ENCODE measurements at regions of chr19 and their contacts with region 1.

Region 1: GRCh38 chr19:19145684-19146608 is 7.7 kb upstream of the TMEM161A start:
- DNase-seq: peak; percentile 76 to 83
- ATAC-seq: peak; percentile 65 to 84 (median 76)
- H3K4me3 ChIP-seq: peak overlapping the region in 6 of 10 donors; percentile 10 to 37 (median 27)
- H3K27ac ChIP-seq: peak overlapping the region in 5 of 10 donors; percentile 12 to 65 (median 31)
- H3K4me1 ChIP-seq: peaks cover 0 to 9% (median 4%) of the 10 kb centered on the region in 9 donors
- H3K27me3 ChIP-seq: no peaks in the 10 kb centered on the region
- CTCF ChIP-seq: peak; percentile 88 to 93 (median 91)

Region 2: GRCh38 chr19:19157808-19158207 is 11.9 kb after region 1 on chr19:
- intact Hi-C with region 1: no loop called
- DNase-seq: no peak
- ATAC-seq: no peak
- H3K4me3 ChIP-seq: no peak overlapping the region
- H3K27ac ChIP-seq: no peak overlapping the region
- H3K4me1 ChIP-seq: no peaks in the 10 kb centered on the region
- H3K27me3 ChIP-seq: peaks cover 0 to 4% (median 0%) of the 10 kb centered on the region in 7 donors
- CTCF ChIP-seq: no peak

Region 3: GRCh38 chr19:19170053-19170872 is 24.3 kb after region 1 on chr19 and contains the start of gene MEF2B:
- intact Hi-C with region 1: loop called in 3 of 10 experiments (anchors 1 to 2 kb)
- DNase-seq: peak; percentile 80 to 81
- ATAC-seq: peak; percentile 88 to 95 (median 91)
- H3K4me3 ChIP-seq: peak within 1 kb of the TSS in 8 of 10 donors; percentile 11 to 48 (median 38)
- H3K27ac ChIP-seq: peak within 1 kb of the TSS in 2 of 10 donors; percentile 10 to 40
- H3K4me1 ChIP-seq: peaks cover 0 to 31% (median 10%) of the 10 kb centered on the region in 9 donors
- H3K27me3 ChIP-seq: no peaks in the 10 kb centered on the region
- CTCF ChIP-seq: no peak
- total RNA-seq, gene MEF2B: 0.34 to 0.99 (median 0.54) TPM in 7 of 10 donors, not detected in the others

Region 4: DNA sequence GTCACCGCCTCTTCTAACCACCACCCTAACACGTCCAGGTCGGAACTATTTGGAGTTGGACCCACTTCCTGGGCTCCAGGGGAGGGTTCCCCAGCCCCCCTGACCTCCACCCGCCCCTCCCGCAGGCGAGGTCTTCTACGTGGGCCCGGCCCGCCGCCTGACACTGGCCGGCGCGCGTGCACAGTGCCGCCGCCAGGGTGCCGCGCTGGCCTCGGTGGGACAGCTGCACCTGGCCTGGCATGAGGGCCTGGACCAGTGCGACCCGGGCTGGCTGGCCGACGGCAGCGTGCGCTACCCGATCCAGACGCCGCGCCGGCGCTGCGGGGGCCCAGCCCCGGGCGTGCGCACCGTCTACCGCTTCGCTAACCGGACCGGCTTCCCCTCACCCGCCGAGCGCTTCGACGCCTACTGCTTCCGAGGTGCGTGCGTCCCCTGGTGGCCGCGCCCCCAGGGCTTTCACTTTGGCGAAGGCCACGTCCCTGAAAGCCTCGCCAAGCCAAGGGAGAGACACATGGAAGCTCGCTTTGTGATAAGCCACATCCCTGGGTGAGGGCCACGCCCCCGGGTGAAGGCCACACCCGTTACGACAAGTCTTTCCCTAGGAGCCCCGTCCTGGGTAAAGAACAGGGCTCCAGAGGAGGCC is 79.0 kb after region 1 on chr19:
- intact Hi-C with region 1: loop called in 1 of 10 experiments (anchors 5 kb)
- DNase-seq: peak; percentile 26 to 57
- ATAC-seq: peak in 6 of 8 donors; percentile 28 to 74 (median 56)
- H3K4me3 ChIP-seq: peak overlapping the region in 8 of 10 donors; percentile 21 to 53 (median 37)
- H3K27ac ChIP-seq: no peak overlapping the region
- H3K4me1 ChIP-seq: peaks cover 0 to 10% (median 0%) of the 10 kb centered on the region in 9 donors
- H3K27me3 ChIP-seq: peaks cover 8 to 76% (median 45%) of the 10 kb centered on the region in 7 donors
- CTCF ChIP-seq: peak; percentile 31 to 81 (median 56)

Region 5: GRCh38 chr19:19259741-19260140 is 113.8 kb after region 1 on chr19:
- intact Hi-C with region 1: no loop called
- DNase-seq: no peak
- ATAC-seq: no peak
- H3K4me3 ChIP-seq: no peak overlapping the region
- H3K27ac ChIP-seq: no peak overlapping the region
- H3K4me1 ChIP-seq: peaks cover 0 to 9% (median 5%) of the 10 kb centered on the region in 9 donors
- H3K27me3 ChIP-seq: peaks cover 4 to 92% (median 86%) of the 10 kb centered on the region in 7 donors
- CTCF ChIP-seq: no peak

Region 6: DNA sequence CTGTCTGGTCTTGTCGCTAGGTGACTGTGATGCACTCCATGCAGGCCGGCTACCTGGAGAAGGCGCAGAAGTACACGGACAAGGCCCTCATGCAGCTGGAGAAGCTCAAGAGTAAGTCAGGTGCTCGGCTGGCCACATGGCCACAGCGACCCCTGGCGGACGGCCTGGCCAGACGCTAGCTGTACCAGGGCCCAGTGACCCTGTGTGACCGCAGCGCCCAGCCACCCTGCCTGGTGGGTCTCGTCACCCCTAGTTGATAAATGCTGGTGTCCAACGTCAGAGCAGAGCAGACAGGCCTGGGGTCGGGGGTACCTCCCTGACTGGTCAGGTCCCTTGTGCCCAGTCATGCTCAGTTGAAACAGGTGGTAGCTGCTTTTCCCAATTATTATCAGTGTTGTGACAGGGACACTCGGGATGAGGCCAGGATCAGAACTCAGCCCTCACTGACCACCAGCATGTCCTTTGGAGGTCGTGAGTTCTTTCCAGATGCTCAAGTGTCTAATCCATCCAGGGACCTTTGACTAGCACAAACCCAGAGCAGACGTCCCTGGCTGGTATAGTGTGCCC is 196.9 kb after region 1 on chr19:
- intact Hi-C with region 1: loop called in 3 of 10 experiments (anchors 5 to 10 kb)
- DNase-seq: peak; percentile 50 to 64
- ATAC-seq: peak; percentile 68 to 88 (median 76)
- H3K4me3 ChIP-seq: no peak overlapping the region
- H3K27ac ChIP-seq: no peak overlapping the region
- H3K4me1 ChIP-seq: peaks cover 0 to 8% (median 0%) of the 10 kb centered on the region in 9 donors
- H3K27me3 ChIP-seq: no peaks in the 10 kb centered on the region
- CTCF ChIP-seq: peak; percentile 52 to 85 (median 78)